Caco-2 (cell line): ENCODE measurements at regions of chr1 and their contacts with region 1.

Region 1: GRCh38 chr1:214328770-214329469 is 48.0 kb downstream of the SMYD2 start:
- DNase-seq: peak; percentile 86 to 88
- H3K4me3 ChIP-seq: no peak overlapping the region
- H3K4me3 Mint-ChIP-seq: peak overlapping the region; percentile 44
- H3K27ac Mint-ChIP-seq: peak overlapping the region; percentile 63
- H3K4me1 ChIP-seq: peaks cover 32% of the 10 kb centered on the region
- H3K4me1 Mint-ChIP-seq: peaks cover 55% of the 10 kb centered on the region
- H3K27me3 ChIP-seq: no peaks in the 10 kb centered on the region
- H3K27me3 Mint-ChIP-seq: no peaks in the 10 kb centered on the region
- CTCF ChIP-seq: peak; percentile 93

Region 2: DNA sequence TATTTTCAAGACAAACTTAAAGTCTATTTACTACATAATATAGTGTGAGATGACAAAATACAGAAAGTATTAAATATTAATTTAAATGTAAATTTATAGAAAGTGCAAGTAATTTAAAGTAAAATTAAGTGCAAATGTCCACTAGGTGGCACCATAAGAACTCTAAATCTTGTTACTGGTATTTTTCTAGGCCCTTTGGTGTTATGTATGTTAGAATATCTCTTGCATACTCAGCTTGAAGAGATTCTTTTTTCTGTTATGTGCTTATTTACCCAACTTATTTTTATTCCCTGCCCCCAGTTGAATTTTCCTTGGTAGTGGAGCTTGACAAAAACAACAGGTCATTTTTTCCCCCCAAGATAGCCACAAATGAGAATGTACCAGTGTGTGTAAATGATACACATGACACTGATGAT is 1206.4 kb before region 1 on chr1:
- CTCF ChIA-PET with region 1: interaction called, 3 read pairs
- POLR2A ChIA-PET with region 1: no interaction called
- intact Hi-C with region 1: loop called (anchors 10 kb)
- DNase-seq: peak in 1 of 2 experiments; percentile 39
- H3K4me3 ChIP-seq: no peak overlapping the region
- H3K4me3 Mint-ChIP-seq: no peak overlapping the region
- H3K27ac Mint-ChIP-seq: peak overlapping the region; percentile 65
- H3K4me1 ChIP-seq: peaks cover 22% of the 10 kb centered on the region
- H3K4me1 Mint-ChIP-seq: peaks cover 27% of the 10 kb centered on the region
- H3K27me3 ChIP-seq: no peaks in the 10 kb centered on the region
- H3K27me3 Mint-ChIP-seq: no peaks in the 10 kb centered on the region
- CTCF ChIP-seq: peak in 1 of 2 experiments; percentile 36

Region 3: DNA sequence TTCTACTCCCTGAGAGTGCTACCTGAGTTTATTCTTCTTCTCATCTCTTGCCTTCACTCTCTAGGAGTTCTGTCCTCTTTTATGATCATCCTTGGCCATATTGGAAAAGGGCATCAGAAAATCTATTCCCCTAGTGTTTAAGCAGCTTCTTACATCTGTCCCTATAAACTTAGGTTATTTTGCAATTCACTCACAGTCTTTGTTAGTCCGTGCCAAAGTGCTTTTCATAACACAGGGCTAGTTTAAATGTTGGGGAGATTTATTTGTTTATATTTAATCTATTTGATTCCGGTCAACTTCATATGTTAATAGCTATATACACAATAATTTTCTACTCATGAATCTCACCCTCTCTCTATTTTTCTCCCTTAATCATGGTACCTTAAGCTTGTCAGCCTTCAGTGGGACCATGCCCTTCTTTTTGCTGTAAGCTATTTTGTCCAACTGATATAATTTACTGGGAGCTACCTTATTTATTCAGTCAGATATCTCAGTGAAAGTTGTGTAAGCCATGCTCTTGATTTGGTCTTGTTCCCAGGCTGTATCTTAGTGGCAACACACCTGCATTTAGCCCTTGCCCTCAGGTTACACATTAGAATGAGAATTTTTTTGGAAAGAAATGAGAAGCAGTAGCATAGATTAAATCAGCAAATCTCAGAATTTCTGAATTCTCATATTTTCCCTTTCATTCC is 154.3 kb before region 1 on chr1:
- CTCF ChIA-PET with region 1: no interaction called
- POLR2A ChIA-PET with region 1: no interaction called
- intact Hi-C with region 1: no loop called
- DNase-seq: no peak
- H3K4me3 ChIP-seq: no peak overlapping the region
- H3K4me3 Mint-ChIP-seq: no peak overlapping the region
- H3K27ac Mint-ChIP-seq: no peak overlapping the region
- H3K4me1 ChIP-seq: no peaks in the 10 kb centered on the region
- H3K4me1 Mint-ChIP-seq: no peaks in the 10 kb centered on the region
- H3K27me3 ChIP-seq: no peaks in the 10 kb centered on the region
- H3K27me3 Mint-ChIP-seq: no peaks in the 10 kb centered on the region
- CTCF ChIP-seq: no peak

Region 4: GRCh38 chr1:214271174-214271858 is 57.6 kb before region 1 on chr1:
- CTCF ChIA-PET with region 1: interaction called, 14 read pairs
- POLR2A ChIA-PET with region 1: no interaction called
- intact Hi-C with region 1: loop called (anchors 2 kb)
- DNase-seq: peak in 1 of 2 experiments; percentile 49
- H3K4me3 ChIP-seq: no peak overlapping the region
- H3K4me3 Mint-ChIP-seq: no peak overlapping the region
- H3K27ac Mint-ChIP-seq: no peak overlapping the region
- H3K4me1 ChIP-seq: peaks cover 23% of the 10 kb centered on the region; the same call in 1 of the 2 replicates
- H3K4me1 Mint-ChIP-seq: peaks cover 39% of the 10 kb centered on the region
- H3K27me3 ChIP-seq: no peaks in the 10 kb centered on the region
- H3K27me3 Mint-ChIP-seq: no peaks in the 10 kb centered on the region
- CTCF ChIP-seq: peak in 1 of 2 experiments; percentile 49

Region 5: DNA sequence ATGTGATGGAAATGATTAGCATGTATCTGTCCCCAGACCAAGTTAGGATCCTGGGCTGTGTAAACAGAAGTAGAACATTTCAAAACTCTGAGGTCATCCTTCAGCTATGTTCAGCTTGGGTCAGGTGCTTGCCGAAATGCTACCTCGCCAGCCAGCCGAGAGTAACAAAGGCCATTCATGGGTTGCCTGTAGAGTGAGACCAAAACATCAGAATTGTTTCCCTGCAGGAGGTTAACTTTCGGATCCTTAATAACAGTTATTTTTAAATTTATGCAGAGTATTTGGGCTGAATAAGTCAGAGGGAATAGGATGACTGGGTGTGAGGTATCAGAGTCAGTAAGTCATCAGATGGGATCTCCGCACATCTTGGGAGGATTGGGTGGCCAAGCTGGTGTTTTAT is 12.3 kb before region 1 on chr1:
- CTCF ChIA-PET with region 1: interaction called, 17 read pairs
- POLR2A ChIA-PET with region 1: no interaction called
- intact Hi-C with region 1: no loop called
- DNase-seq: peak in 1 of 2 experiments; percentile 27
- H3K4me3 ChIP-seq: no peak overlapping the region
- H3K4me3 Mint-ChIP-seq: no peak overlapping the region
- H3K27ac Mint-ChIP-seq: peak overlapping the region; percentile 30
- H3K4me1 ChIP-seq: peaks cover 14% of the 10 kb centered on the region; the same call in 1 of the 2 replicates
- H3K4me1 Mint-ChIP-seq: peaks cover 14% of the 10 kb centered on the region
- H3K27me3 ChIP-seq: no peaks in the 10 kb centered on the region
- H3K27me3 Mint-ChIP-seq: no peaks in the 10 kb centered on the region
- CTCF ChIP-seq: no peak

Region 6: GRCh38 chr1:214506972-214507482 is 178.1 kb after region 1 on chr1:
- CTCF ChIA-PET with region 1: no interaction called
- POLR2A ChIA-PET with region 1: no interaction called
- intact Hi-C with region 1: loop called (anchors 1 kb)
- DNase-seq: peak; percentile 97
- H3K4me3 ChIP-seq: peak overlapping the region; percentile 34
- H3K4me3 Mint-ChIP-seq: peak overlapping the region; percentile 65
- H3K27ac Mint-ChIP-seq: peak overlapping the region; percentile 92
- H3K4me1 ChIP-seq: peaks cover 59% of the 10 kb centered on the region
- H3K4me1 Mint-ChIP-seq: peaks cover 47% of the 10 kb centered on the region
- H3K27me3 ChIP-seq: no peaks in the 10 kb centered on the region
- H3K27me3 Mint-ChIP-seq: no peaks in the 10 kb centered on the region
- CTCF ChIP-seq: no peak

Region 7: DNA sequence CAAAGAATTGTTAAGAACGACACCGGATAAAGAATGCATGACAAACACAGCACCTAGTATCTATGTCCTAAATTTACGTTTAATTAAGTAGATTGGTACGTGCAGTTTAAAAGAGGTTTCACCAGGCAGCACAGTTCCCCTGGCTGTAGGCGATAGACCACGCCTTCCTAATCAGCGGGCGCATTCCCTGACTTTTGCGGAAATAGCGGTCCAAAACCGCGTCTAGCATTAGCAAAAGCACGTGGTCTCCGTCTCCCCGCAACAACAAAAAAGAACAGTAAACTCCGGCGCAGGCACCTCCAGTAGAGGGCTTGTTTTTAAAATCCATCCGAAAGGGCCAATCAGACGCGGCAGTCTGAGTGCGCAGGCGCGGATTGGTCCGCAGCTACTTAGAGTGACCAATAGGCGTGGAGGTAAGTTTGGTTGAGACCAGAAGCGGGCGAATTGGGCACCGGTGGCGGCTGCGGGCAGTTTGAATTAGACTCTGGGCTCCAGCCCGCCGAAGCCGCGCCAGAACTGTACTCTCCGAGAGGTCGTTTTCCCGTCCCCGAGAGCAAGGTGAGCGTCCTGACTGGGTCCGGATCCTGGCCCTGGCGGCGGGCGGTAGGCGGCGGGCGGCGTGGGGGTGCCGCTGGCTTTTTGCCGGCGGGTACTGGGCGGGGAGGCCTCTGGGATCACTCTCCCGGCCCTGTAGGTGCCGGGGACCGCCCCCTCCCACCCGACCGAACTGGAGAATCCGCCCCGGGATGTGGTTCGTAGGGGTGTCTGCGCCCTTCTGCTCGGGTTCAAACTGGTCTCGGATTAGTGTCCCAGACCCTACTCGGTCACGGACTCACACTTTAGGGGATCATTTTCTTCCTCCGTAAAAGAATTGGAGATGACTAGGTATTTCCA is 274.1 kb after region 1 on chr1 and contains the start of gene CENPF:
- CTCF ChIA-PET with region 1: interaction called, 5 read pairs
- POLR2A ChIA-PET with region 1: interaction called, 3 read pairs
- intact Hi-C with region 1: loop called (anchors 5 kb)
- DNase-seq: peak; percentile 96 to 98
- H3K4me3 ChIP-seq: peak within 1 kb of the TSS; percentile 78
- H3K4me3 Mint-ChIP-seq: peak within 1 kb of the TSS; percentile 97
- H3K27ac Mint-ChIP-seq: peak within 1 kb of the TSS; percentile 98
- H3K4me1 ChIP-seq: peaks cover 14% of the 10 kb centered on the region; the same call in 1 of the 2 replicates
- H3K4me1 Mint-ChIP-seq: peaks cover 19% of the 10 kb centered on the region
- H3K27me3 ChIP-seq: no peaks in the 10 kb centered on the region
- H3K27me3 Mint-ChIP-seq: no peaks in the 10 kb centered on the region
- CTCF ChIP-seq: peak in 1 of 2 experiments; percentile 10
- total RNA-seq, gene CENPF: 130 and 145 TPM in 2 replicates